Posterior vena cava (tissue), 2 donors: ENCODE measurements at regions of chr5 and their contacts with region 1.

Region 1: GRCh38 chr5:71719063-71719964 is at the start of gene CARTPT:
- DNase-seq: no peak
- total RNA-seq, gene CARTPT: not detected

Region 2: GRCh38 chr5:71633255-71634155 is 85.8 kb before region 1 on chr5:
- intact Hi-C with region 1: no loop called
- DNase-seq: no peak

Region 3: GRCh38 chr5:73582285-73583145 is 1863.2 kb after region 1 on chr5:
- intact Hi-C with region 1: loop called in 1 of 2 experiments (anchors 5 kb)
- DNase-seq: no peak